Activated B cell treated with CpG ODN at 0.5 μM for 24 hours (primary cell): ENCODE measurements at regions of chr6 and their contacts with region 1.

Region 1: DNA sequence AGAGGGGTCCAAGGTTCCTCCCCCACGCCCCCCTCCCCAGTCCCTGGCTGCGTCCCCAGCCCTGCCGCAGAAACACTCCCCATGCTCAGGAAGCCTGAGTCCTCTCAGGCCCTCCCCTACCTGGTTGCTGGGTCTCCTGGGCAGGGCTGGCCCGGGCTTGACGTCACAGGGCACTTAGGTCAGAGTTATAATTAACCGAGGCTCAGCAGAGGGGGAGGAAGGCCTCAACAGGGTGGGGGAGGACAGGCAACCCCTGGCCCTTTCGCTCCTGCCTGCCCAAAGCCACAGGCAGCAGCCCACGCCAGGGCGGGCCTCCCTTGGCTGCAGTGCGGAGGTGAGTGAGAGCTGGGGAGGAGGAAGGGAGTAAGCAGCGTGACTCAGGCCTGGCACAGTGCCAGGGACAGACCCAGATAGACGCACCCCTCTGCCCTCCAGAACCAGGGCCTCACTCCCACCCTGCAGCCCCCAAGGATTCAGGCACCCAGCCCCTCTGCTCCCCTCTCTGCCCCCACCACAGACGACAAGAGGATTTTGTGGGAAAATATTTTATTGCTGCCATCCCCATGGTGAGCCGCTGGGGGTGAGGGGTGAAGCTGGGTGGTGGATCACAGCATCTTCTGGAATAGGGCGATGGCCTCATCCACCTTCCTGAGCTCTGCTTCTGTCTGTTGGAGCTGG is at the start of gene VWA7:
- DNase-seq: peak; percentile 64
- ATAC-seq: peak; percentile 90
- H3K4me3 Mint-ChIP-seq: peak within 1 kb of the TSS; percentile 50
- H3K27ac Mint-ChIP-seq: peak within 1 kb of the TSS; percentile 72
- H3K4me1 Mint-ChIP-seq: peaks cover 30% of the 10 kb centered on the region
- H3K27me3 Mint-ChIP-seq: no peaks in the 10 kb centered on the region
- CTCF ChIP-seq: no peak
- total RNA-seq, gene VWA7: 1.6 and 2.9 TPM in 2 replicates

Region 2: DNA sequence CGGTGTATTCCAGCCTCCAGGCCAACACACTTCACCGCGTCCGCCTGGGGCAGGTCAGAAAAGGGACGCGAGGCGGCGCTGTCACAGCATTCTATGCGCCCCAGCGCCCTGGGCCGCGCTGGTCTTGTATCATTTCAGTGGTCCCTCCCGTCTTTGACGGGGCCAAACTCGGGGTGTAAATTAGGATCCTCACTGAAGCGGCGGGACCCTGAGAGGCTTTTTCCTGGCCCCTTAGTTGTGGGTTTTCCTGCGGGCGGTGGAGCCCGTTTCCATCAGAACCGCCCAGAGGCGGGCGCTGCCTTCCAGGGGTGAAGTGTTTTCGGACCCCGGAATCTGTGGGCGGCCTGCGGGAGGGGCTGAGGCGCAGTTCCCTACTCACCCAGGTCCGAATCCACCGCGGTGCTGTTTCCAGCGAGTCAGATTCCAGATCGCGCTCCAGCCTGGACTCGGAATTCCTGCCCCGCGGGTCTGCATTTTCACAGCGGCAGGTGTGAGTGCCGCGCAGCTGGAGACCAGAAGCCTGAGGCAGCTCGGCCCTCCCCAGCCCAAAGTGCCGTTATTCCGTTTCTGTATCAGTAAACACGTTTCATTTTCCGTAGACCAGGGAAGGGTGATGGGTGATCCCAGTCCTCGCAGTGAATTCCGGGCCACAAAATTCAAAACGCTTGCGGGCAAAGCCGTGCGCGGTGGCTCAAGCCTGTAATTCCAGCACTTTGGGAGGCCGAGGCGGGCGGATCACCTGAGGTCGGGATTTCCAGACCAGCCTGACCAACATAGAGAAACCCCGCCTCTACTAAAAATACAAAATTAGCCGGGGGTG is 283.0 kb before region 1 on chr6:
- CTCF ChIA-PET with region 1: no interaction called
- POLR2A ChIA-PET with region 1: no interaction called
- intact Hi-C with region 1: no loop called
- DNase-seq: peak; percentile 76
- ATAC-seq: peak; percentile 48
- H3K4me3 Mint-ChIP-seq: peak overlapping the region; percentile 90
- H3K27ac Mint-ChIP-seq: peak overlapping the region; percentile 92
- H3K4me1 Mint-ChIP-seq: peaks cover 54% of the 10 kb centered on the region
- H3K27me3 Mint-ChIP-seq: no peaks in the 10 kb centered on the region
- CTCF ChIP-seq: no peak

Region 3: GRCh38 chr6:31815025-31815838 is 38.1 kb after region 1 on chr6 and contains the starts of genes HSPA1A and HSPA1L:
- CTCF ChIA-PET with region 1: no interaction called
- POLR2A ChIA-PET with region 1: interaction called, 11 read pairs
- intact Hi-C with region 1: no loop called
- DNase-seq: peak; percentile 59
- ATAC-seq: peak; percentile 49
- H3K4me3 Mint-ChIP-seq: peak within 1 kb of the TSS; percentile 91
- H3K27ac Mint-ChIP-seq: peak within 1 kb of the TSS; percentile 90
- H3K4me1 Mint-ChIP-seq: peaks cover 30% of the 10 kb centered on the region
- H3K27me3 Mint-ChIP-seq: no peaks in the 10 kb centered on the region
- CTCF ChIP-seq: no peak
- total RNA-seq, gene HSPA1A: 27.1 and 28.1 TPM in 2 replicates
- total RNA-seq, gene HSPA1L: 1.2 and 2.1 TPM in 2 replicates